ENCODE measurements at regions of chr22 and their contacts with region 1.

Region 1: DNA sequence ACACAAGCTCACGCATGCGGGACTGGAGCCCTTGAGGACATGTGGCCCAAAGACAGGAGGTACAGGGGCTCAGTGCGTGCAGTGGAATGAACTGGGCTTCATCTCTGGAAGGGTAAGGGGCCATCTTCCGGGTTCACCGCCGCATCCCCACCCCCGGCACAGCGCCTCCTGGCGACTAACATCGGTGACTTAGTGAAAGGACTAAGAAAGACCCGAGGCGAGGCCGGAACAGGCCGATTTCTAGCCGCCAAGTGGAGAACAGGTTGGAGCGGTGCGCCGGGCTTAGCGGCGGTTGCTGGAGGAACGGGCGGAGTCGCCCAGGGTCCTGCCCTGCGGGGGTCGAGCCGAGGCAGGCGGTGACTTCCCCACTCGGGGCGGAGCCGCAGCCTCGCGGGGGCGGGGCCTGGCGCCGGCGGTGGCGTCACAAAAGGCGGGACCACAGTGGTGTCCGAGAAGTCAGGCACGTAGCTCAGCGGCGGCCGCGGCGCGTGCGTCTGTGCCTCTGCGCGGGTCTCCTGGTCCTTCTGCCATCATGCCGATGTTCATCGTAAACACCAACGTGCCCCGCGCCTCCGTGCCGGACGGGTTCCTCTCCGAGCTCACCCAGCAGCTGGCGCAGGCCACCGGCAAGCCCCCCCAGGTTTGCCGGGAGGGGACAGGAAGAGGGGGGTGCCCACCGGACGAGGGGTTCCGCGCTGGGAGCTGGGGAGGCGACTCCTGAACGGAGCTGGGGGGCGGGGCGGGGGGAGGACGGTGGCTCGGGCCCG is at the start of gene MIF:
- DNase-seq: peak; percentile 88 to 100 (median 94)
- ATAC-seq: peak; percentile 96
- H3K4me3 ChIP-seq: peak within 1 kb of the TSS; percentile 88
- H3K4me3 Mint-ChIP-seq: peak within 1 kb of the TSS; percentile 88 to 97 (median 94)
- H3K27ac ChIP-seq: peak within 1 kb of the TSS; percentile 93
- H3K27ac Mint-ChIP-seq: peak within 1 kb of the TSS; percentile 92 to 100 (median 97)
- H3K4me1 ChIP-seq: peaks cover 16% of the 10 kb centered on the region in 2 donors
- H3K4me1 Mint-ChIP-seq: peaks cover 12 to 39% (median 30%) of the 10 kb centered on the region in 7 donors
- H3K27me3 ChIP-seq: no peaks in the 10 kb centered on the region
- H3K27me3 Mint-ChIP-seq: no peaks in the 10 kb centered on the region
- total RNA-seq, gene MIF: 179 to 1,010 (median 197) TPM

Region 2: GRCh38 chr22:23144932-23145873 is 748.9 kb before region 1 on chr22 and contains the start of gene RAB36:
- CTCF ChIA-PET with region 1: no interaction called
- POLR2A ChIA-PET with region 1: no interaction called
- intact Hi-C with region 1: loop called in 1 of 2 experiments (anchors 5 kb)
- DNase-seq: peak; percentile 77 to 93 (median 81)
- ATAC-seq: peak; percentile 78
- H3K4me3 ChIP-seq: peak within 1 kb of the TSS; percentile 25
- H3K4me3 Mint-ChIP-seq: peak within 1 kb of the TSS; percentile 72 to 84 (median 82)
- H3K27ac ChIP-seq: peak within 1 kb of the TSS; percentile 78
- H3K27ac Mint-ChIP-seq: peak within 1 kb of the TSS; percentile 79 to 96 (median 93)
- H3K4me1 ChIP-seq: peaks cover 38 to 45% of the 10 kb centered on the region in 2 donors
- H3K4me1 Mint-ChIP-seq: peaks cover 27 to 60% (median 49%) of the 10 kb centered on the region in 7 donors
- H3K27me3 ChIP-seq: no peaks in the 10 kb centered on the region
- H3K27me3 Mint-ChIP-seq: peaks cover 0 to 20% (median 0%) of the 10 kb centered on the region in 5 donors
- total RNA-seq, gene RAB36: 0.10 to 1.2 (median 0.38) TPM

Region 3: DNA sequence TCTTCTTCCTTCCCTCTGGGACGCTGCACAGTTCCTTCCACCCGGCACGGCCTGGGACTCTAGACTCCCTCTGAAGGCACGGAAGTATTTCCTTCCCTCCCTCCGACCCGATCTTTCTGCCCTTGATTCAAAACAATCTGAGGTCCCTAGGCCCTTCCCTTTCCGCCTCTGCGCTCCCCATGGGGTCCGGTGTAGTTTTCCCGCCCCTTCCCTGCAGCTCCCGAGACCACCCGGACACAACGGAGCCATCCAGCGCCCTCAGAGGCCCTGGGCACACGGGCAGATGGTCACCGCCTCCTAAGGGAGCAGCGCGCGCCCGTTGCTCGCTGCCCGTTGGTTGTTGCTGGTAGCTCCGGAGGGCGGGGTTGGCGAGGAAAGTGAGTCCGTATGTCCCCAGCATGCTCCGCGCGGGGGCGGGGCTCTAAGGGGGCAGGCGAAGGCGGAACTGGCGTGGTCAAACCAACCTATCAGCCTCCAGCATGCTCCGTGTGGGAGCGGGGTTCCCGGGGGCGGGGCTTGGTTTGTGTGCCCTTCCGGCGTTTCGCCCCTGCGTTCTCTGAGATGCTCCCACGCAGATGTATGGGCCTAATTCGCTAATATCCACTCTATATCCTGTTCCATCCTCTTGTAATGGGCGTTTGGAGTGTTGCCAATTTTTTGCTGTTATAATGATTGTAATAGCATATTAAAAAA is 19.7 kb after region 1 on chr22:
- CTCF ChIA-PET with region 1: interaction called, 3 read pairs
- POLR2A ChIA-PET with region 1: interaction called, 67 read pairs
- intact Hi-C with region 1: loop called (anchors 1 kb)
- DNase-seq: peak; percentile 94 to 100 (median 97)
- ATAC-seq: peak; percentile 100
- H3K4me3 ChIP-seq: peak overlapping the region; percentile 83
- H3K4me3 Mint-ChIP-seq: peak overlapping the region; percentile 84 to 97 (median 93)
- H3K27ac ChIP-seq: peak overlapping the region; percentile 78
- H3K27ac Mint-ChIP-seq: peak overlapping the region; percentile 89 to 99 (median 98)
- H3K4me1 ChIP-seq: peaks cover 0 to 7% of the 10 kb centered on the region in 2 donors
- H3K4me1 Mint-ChIP-seq: peaks cover 7 to 34% (median 16%) of the 10 kb centered on the region in 7 donors
- H3K27me3 ChIP-seq: no peaks in the 10 kb centered on the region
- H3K27me3 Mint-ChIP-seq: peaks cover 0 to under 1% (median 0%) of the 10 kb centered on the region in 5 donors

Region 4: GRCh38 chr22:24433813-24434470 is 539.8 kb after region 1 on chr22:
- CTCF ChIA-PET with region 1: no interaction called
- POLR2A ChIA-PET with region 1: no interaction called
- intact Hi-C with region 1: loop called in 1 of 2 experiments (anchors 2 kb)
- DNase-seq: no peak
- ATAC-seq: peak; percentile 75
- H3K4me3 ChIP-seq: peak overlapping the region; percentile 7
- H3K4me3 Mint-ChIP-seq: peak overlapping the region; percentile 73 to 84 (median 78)
- H3K27ac ChIP-seq: peak overlapping the region; percentile 97
- H3K27ac Mint-ChIP-seq: peak overlapping the region; percentile 85 to 97 (median 94)
- H3K4me1 ChIP-seq: peaks cover 87 to 88% of the 10 kb centered on the region in 2 donors
- H3K4me1 Mint-ChIP-seq: peaks cover 48 to 95% (median 86%) of the 10 kb centered on the region in 7 donors
- H3K27me3 ChIP-seq: no peaks in the 10 kb centered on the region
- H3K27me3 Mint-ChIP-seq: no peaks in the 10 kb centered on the region